GM12878 (cell line): ENCODE measurements at regions of chr2 and their contacts with region 1.

Region 1: DNA sequence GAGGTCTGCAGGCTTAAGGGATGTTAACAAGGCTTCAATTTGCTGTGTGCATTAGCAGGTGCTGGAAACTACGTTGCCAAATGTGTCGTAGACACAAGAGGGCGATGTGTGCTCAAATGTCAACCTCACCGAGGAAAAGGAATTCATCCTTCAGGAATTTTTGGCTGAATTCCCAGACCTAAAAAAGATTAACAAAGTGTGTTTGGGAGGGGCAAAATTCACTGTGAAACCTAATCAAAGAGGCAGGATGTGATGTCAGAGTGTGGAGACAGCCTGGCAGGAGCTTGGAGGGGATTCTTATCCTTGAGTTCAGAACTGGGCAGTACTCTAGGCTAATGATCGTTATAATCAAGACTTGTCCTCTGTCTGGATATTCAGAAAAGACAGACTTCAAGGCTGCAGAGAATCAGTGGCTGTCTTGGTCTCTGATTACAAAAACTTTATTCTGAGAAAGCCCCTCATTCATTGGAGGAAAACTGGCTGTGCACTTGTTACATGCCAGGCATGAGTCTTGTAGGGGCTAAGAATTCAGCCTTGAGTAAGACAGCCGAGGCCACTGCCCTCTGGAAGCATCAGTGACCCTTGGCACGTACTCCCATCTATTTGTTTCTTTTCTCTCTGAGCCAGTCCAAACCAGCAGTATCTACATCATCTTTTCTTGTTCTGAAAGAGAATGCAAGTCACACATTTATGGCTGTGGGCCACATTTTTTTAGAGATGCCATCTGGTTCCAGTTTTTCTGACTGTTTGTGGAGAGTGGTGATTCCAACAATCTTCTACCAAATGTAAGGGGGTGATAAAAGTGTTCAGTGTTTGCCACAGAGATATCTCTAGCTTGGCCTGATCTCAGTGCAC is 18.7 kb upstream of the SCYGR1 start:
- DNase-seq: no peak
- ATAC-seq: peak; percentile 67
- H3K4me3 ChIP-seq: no peak overlapping the region
- H3K27ac ChIP-seq: no peak overlapping the region
- H3K4me1 ChIP-seq: peaks cover 14% of the 10 kb centered on the region
- H3K27me3 ChIP-seq: no peaks in the 10 kb centered on the region
- CTCF ChIP-seq: peak; percentile 61 to 90 (median 74)
- EP300 ChIP-seq: no peak
- POLR2A ChIP-seq: no peak
- RAD21 ChIP-seq: peak; percentile 85

Region 2: GRCh38 chr2:227351639-227352038 is 54.8 kb before region 1 on chr2:
- CTCF ChIA-PET with region 1: interaction called, 18 read pairs
- POLR2A ChIA-PET with region 1: interaction called, 5 read pairs
- RAD21 ChIA-PET with region 1: interaction called, 4 read pairs
- SMC1A ChIA-PET with region 1: interaction called, 11 read pairs
- in situ Hi-C with region 1: no loop called
- intact Hi-C with region 1: no loop called
- DNase-seq: peak; percentile 37
- ATAC-seq: peak; percentile 96
- H3K4me3 ChIP-seq: 0 out of 2 replicates have a peak overlapping the region, but pooled peaks have one; percentile 20
- H3K27ac ChIP-seq: peak overlapping the region; percentile 73
- H3K4me1 ChIP-seq: no peaks in the 10 kb centered on the region; the same call in 1 of the 2 replicates
- H3K27me3 ChIP-seq: no peaks in the 10 kb centered on the region
- CTCF ChIP-seq: no peak
- EP300 ChIP-seq: no peak
- POLR2A ChIP-seq: no peak
- RAD21 ChIP-seq: no peak

Region 3: GRCh38 chr2:227460070-227460485 is 53.7 kb after region 1 on chr2:
- CTCF ChIA-PET with region 1: interaction called, 48 read pairs
- POLR2A ChIA-PET with region 1: interaction called, 11 read pairs
- RAD21 ChIA-PET with region 1: interaction called, 16 read pairs
- SMC1A ChIA-PET with region 1: interaction called, 191 read pairs
- in situ Hi-C with region 1: no loop called
- intact Hi-C with region 1: loop called (anchors 1 kb)
- DNase-seq: no peak
- ATAC-seq: peak; percentile 67
- H3K4me3 ChIP-seq: no peak overlapping the region
- H3K27ac ChIP-seq: peak overlapping the region; percentile 54
- H3K4me1 ChIP-seq: peaks cover 55% of the 10 kb centered on the region
- H3K27me3 ChIP-seq: no peaks in the 10 kb centered on the region
- CTCF ChIP-seq: no peak
- EP300 ChIP-seq: peak; percentile 59 to 65; a peak in 2 of 4 replicates
- POLR2A ChIP-seq: no peak
- RAD21 ChIP-seq: no peak

Region 4: GRCh38 chr2:227503433-227504406 is 97.3 kb after region 1 on chr2:
- CTCF ChIA-PET with region 1: interaction called, 10 read pairs
- POLR2A ChIA-PET with region 1: no interaction called
- RAD21 ChIA-PET with region 1: interaction called, 3 read pairs
- SMC1A ChIA-PET with region 1: interaction called, 7 read pairs
- in situ Hi-C with region 1: no loop called
- intact Hi-C with region 1: no loop called
- DNase-seq: no peak
- ATAC-seq: no peak
- H3K4me3 ChIP-seq: no peak overlapping the region
- H3K27ac ChIP-seq: no peak overlapping the region
- H3K4me1 ChIP-seq: peaks cover 10% of the 10 kb centered on the region; the same call in 1 of the 2 replicates
- H3K27me3 ChIP-seq: no peaks in the 10 kb centered on the region
- CTCF ChIP-seq: no peak
- EP300 ChIP-seq: no peak
- POLR2A ChIP-seq: no peak
- RAD21 ChIP-seq: no peak

Region 5: GRCh38 chr2:227551836-227552235 is 145.4 kb after region 1 on chr2:
- CTCF ChIA-PET with region 1: interaction called, 10 read pairs
- POLR2A ChIA-PET with region 1: no interaction called
- RAD21 ChIA-PET with region 1: no interaction called
- SMC1A ChIA-PET with region 1: interaction called, 16 read pairs
- in situ Hi-C with region 1: no loop called
- intact Hi-C with region 1: loop called (anchors 5 kb)
- DNase-seq: no peak
- ATAC-seq: no peak
- H3K4me3 ChIP-seq: no peak overlapping the region
- H3K27ac ChIP-seq: no peak overlapping the region
- H3K4me1 ChIP-seq: no peaks in the 10 kb centered on the region
- H3K27me3 ChIP-seq: no peaks in the 10 kb centered on the region
- CTCF ChIP-seq: no peak
- EP300 ChIP-seq: no peak
- POLR2A ChIP-seq: no peak
- RAD21 ChIP-seq: no peak

Region 6: GRCh38 chr2:227655454-227655853 is 249.1 kb after region 1 on chr2:
- CTCF ChIA-PET with region 1: interaction called, 49 read pairs
- POLR2A ChIA-PET with region 1: no interaction called
- RAD21 ChIA-PET with region 1: interaction called, 19 read pairs
- SMC1A ChIA-PET with region 1: interaction called, 27 read pairs
- in situ Hi-C with region 1: no loop called
- intact Hi-C with region 1: loop called (anchors 1 kb)
- DNase-seq: no peak
- ATAC-seq: peak; percentile 53
- H3K4me3 ChIP-seq: no peak overlapping the region
- H3K27ac ChIP-seq: no peak overlapping the region
- H3K4me1 ChIP-seq: no peaks in the 10 kb centered on the region
- H3K27me3 ChIP-seq: no peaks in the 10 kb centered on the region
- CTCF ChIP-seq: no peak
- EP300 ChIP-seq: no peak
- POLR2A ChIP-seq: no peak
- RAD21 ChIP-seq: no peak

Region 7: GRCh38 chr2:227862227-227862740 is 455.9 kb after region 1 on chr2:
- CTCF ChIA-PET with region 1: interaction called, 29 read pairs
- POLR2A ChIA-PET with region 1: no interaction called
- RAD21 ChIA-PET with region 1: interaction called, 6 read pairs
- SMC1A ChIA-PET with region 1: interaction called, 5 read pairs
- in situ Hi-C with region 1: no loop called
- intact Hi-C with region 1: loop called (anchors 10 kb)
- DNase-seq: no peak
- ATAC-seq: peak; percentile 63
- H3K4me3 ChIP-seq: no peak overlapping the region
- H3K27ac ChIP-seq: no peak overlapping the region
- H3K4me1 ChIP-seq: no peaks in the 10 kb centered on the region
- H3K27me3 ChIP-seq: no peaks in the 10 kb centered on the region; a peak in 1 of 4 replicates
- CTCF ChIP-seq: peak; percentile 55 to 70 (median 66)
- EP300 ChIP-seq: no peak
- POLR2A ChIP-seq: no peak
- RAD21 ChIP-seq: peak; percentile 86

Region 8: GRCh38 chr2:227877421-227878310 is 471.3 kb after region 1 on chr2:
- CTCF ChIA-PET with region 1: no interaction called
- POLR2A ChIA-PET with region 1: no interaction called
- RAD21 ChIA-PET with region 1: no interaction called
- SMC1A ChIA-PET with region 1: no interaction called
- in situ Hi-C with region 1: no loop called
- intact Hi-C with region 1: no loop called
- DNase-seq: no peak
- ATAC-seq: no peak
- H3K4me3 ChIP-seq: no peak overlapping the region
- H3K27ac ChIP-seq: no peak overlapping the region
- H3K4me1 ChIP-seq: no peaks in the 10 kb centered on the region
- H3K27me3 ChIP-seq: no peaks in the 10 kb centered on the region; a peak in 1 of 4 replicates
- CTCF ChIP-seq: no peak
- EP300 ChIP-seq: no peak
- POLR2A ChIP-seq: no peak
- RAD21 ChIP-seq: no peak

Region 9: GRCh38 chr2:228444161-228444560 is 1037.8 kb after region 1 on chr2:
- CTCF ChIA-PET with region 1: no interaction called
- POLR2A ChIA-PET with region 1: no interaction called
- RAD21 ChIA-PET with region 1: no interaction called
- SMC1A ChIA-PET with region 1: no interaction called
- in situ Hi-C with region 1: no loop called
- intact Hi-C with region 1: no loop called
- DNase-seq: no peak
- ATAC-seq: no peak
- H3K4me3 ChIP-seq: no peak overlapping the region
- H3K27ac ChIP-seq: no peak overlapping the region
- H3K4me1 ChIP-seq: no peaks in the 10 kb centered on the region
- H3K27me3 ChIP-seq: no peaks in the 10 kb centered on the region
- CTCF ChIP-seq: no peak
- EP300 ChIP-seq: no peak
- POLR2A ChIP-seq: no peak
- RAD21 ChIP-seq: no peak